Colonic mucosa (tissue), 4 donors: ENCODE measurements at regions of chr13 and their contacts with region 1.

Region 1: GRCh38 chr13:31199849-31200636 is at the start of gene B3GLCT:
- DNase-seq: peak; percentile 81
- H3K4me3 ChIP-seq: peak within 1 kb of the TSS; percentile 71
- H3K27ac ChIP-seq: peak within 1 kb of the TSS; percentile 98
- H3K4me1 ChIP-seq: no peaks in the 10 kb centered on the region
- H3K27me3 ChIP-seq: no peaks in the 10 kb centered on the region
- CTCF ChIP-seq: peak; percentile 62
- total RNA-seq, gene B3GLCT: 2.8 to 3.1 TPM

Region 2: GRCh38 chr13:31145417-31145816 is 54.6 kb before region 1 on chr13:
- intact Hi-C with region 1: no loop called
- DNase-seq: no peak
- H3K4me3 ChIP-seq: no peak overlapping the region
- H3K27ac ChIP-seq: no peak overlapping the region
- H3K4me1 ChIP-seq: no peaks in the 10 kb centered on the region
- H3K27me3 ChIP-seq: no peaks in the 10 kb centered on the region
- CTCF ChIP-seq: no peak

Region 3: DNA sequence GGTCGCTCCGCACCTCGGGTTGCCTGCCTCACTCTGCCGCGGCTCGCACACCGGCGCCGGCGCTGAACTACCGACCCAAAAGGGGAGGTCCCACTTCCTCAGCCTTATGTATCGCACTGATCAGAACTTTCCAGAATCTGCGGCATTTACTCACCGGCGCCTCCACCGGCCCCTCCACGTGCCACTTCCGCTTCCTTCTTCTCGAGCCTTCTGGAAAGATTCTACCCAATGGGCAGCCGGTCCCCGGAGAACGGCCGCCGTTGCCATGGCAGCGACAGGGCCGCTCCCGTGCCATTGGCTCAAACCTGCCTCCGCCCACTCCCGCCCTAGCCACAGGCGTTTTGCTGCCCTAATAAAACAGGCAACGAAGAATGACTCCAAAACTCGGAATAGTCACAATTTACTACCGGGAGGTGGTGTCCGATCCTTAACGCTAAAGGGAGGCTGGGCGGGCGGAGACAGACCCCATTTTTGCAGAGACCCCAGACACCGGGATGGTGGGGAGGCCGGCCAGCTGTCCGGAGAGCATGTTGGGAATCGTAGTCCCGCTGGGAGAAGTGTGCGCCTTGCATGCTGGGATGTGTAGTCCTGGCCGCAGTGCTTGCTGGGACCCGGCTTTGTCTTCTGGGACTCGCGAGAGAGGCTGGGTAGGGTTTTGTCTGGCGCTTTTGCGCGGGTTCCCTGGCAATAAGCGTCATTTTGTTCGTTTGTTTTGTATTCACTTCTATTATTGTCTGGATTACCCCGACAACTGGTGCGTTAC is 38.0 kb before region 1 on chr13 and contains the start of gene HSPH1:
- intact Hi-C with region 1: loop called (anchors 2 kb)
- DNase-seq: peak; percentile 99
- H3K4me3 ChIP-seq: peak within 1 kb of the TSS; percentile 86
- H3K27ac ChIP-seq: peak within 1 kb of the TSS; percentile 99
- H3K4me1 ChIP-seq: no peaks in the 10 kb centered on the region
- H3K27me3 ChIP-seq: no peaks in the 10 kb centered on the region
- CTCF ChIP-seq: no peak
- total RNA-seq, gene HSPH1: 57.3 to 162 TPM